Ascending aorta (tissue), 2 donors: ENCODE measurements at regions of chr1 and their contacts with region 1.

Region 1: GRCh38 chr1:160006312-160006940 is 25.4 kb downstream of the PIGM start:
- DNase-seq: peak; percentile 23 to 69
- H3K4me3 ChIP-seq: no peak overlapping the region
- H3K27ac ChIP-seq: no peak overlapping the region
- H3K4me1 ChIP-seq: no peaks in the 10 kb centered on the region
- H3K27me3 ChIP-seq: no peaks in the 10 kb centered on the region
- CTCF ChIP-seq: peak; percentile 49 to 74 (median 54)

Region 2: GRCh38 chr1:159798893-159799292 is 207.5 kb before region 1 on chr1:
- intact Hi-C with region 1: loop called (anchors 2 kb)
- DNase-seq: peak in 1 of 2 donors; percentile 75
- H3K4me3 ChIP-seq: no peak overlapping the region
- H3K27ac ChIP-seq: no peak overlapping the region
- H3K4me1 ChIP-seq: no peaks in the 10 kb centered on the region
- H3K27me3 ChIP-seq: no peaks in the 10 kb centered on the region
- CTCF ChIP-seq: peak; percentile 67 to 77 (median 69)

Region 3: GRCh38 chr1:159891275-159892157 is 114.9 kb before region 1 on chr1:
- intact Hi-C with region 1: loop called (anchors 5 kb)
- DNase-seq: peak; percentile 65 to 90
- H3K4me3 ChIP-seq: no peak overlapping the region
- H3K27ac ChIP-seq: peak overlapping the region in 1 of 2 donors; percentile 68
- H3K4me1 ChIP-seq: peaks cover 6 to 10% of the 10 kb centered on the region in 2 donors
- H3K27me3 ChIP-seq: no peaks in the 10 kb centered on the region
- CTCF ChIP-seq: peak; percentile 97 to 99 (median 97)

Region 4: DNA sequence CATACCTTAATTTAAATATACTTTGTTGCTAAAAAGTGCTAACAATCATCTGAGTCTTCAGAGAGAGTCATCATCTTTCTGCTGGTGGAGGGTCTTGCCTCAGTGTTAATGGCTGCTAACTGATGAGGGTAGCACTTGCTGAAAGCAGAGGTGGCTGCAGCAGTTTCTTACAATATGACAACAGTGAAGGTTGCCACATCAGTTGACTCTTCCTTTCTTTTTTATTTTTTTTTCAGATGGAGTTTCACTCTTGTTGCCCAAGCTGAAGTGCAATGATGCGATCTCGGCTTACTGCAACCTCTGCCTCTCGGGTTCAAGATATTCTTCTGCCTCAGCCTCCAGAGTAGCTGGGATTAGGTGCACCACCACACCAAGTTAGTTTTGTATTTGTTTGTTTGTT is 103.9 kb before region 1 on chr1:
- intact Hi-C with region 1: no loop called
- DNase-seq: no peak
- H3K4me3 ChIP-seq: no peak overlapping the region
- H3K27ac ChIP-seq: no peak overlapping the region
- H3K4me1 ChIP-seq: peaks cover 3 to 10% of the 10 kb centered on the region in 2 donors
- H3K27me3 ChIP-seq: no peaks in the 10 kb centered on the region
- CTCF ChIP-seq: no peak

Region 5: GRCh38 chr1:159936273-159936904 is 70.0 kb before region 1 on chr1:
- intact Hi-C with region 1: loop called (anchors 2 kb)
- DNase-seq: peak in 1 of 2 donors; percentile 77
- H3K4me3 ChIP-seq: no peak overlapping the region
- H3K27ac ChIP-seq: no peak overlapping the region
- H3K4me1 ChIP-seq: peaks cover 0 to 2% of the 10 kb centered on the region in 2 donors
- H3K27me3 ChIP-seq: no peaks in the 10 kb centered on the region
- CTCF ChIP-seq: peak; percentile 92 to 99 (median 98)

Region 6: DNA sequence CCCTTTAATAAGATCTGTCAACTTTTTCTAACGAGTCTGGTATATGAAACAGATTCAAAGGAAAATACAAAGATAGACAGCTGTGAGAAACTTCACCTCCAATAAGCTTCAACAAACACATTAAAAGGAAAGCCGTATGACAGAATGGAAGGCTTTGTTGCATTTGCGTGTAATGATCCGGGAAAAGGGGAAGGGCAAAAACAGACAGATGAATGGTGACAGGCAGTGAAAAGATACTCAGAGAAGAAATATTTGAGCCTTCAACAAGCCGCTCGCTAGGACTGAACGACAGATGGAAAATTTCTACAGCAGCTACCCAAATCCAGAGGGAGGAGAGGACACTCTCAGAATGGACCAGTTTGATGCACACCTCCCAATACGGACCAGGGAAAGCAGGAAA is 321.8 kb after region 1 on chr1:
- intact Hi-C with region 1: no loop called
- DNase-seq: no peak
- H3K4me3 ChIP-seq: no peak overlapping the region
- H3K27ac ChIP-seq: no peak overlapping the region
- H3K4me1 ChIP-seq: no peaks in the 10 kb centered on the region
- H3K27me3 ChIP-seq: no peaks in the 10 kb centered on the region
- CTCF ChIP-seq: no peak

Region 7: GRCh38 chr1:161887730-161888287 is 1881.4 kb after region 1 on chr1:
- intact Hi-C with region 1: no loop called
- DNase-seq: no peak
- H3K4me3 ChIP-seq: no peak overlapping the region
- H3K27ac ChIP-seq: no peak overlapping the region
- H3K4me1 ChIP-seq: peaks cover 0 to 4% of the 10 kb centered on the region in 2 donors
- H3K27me3 ChIP-seq: no peaks in the 10 kb centered on the region
- CTCF ChIP-seq: no peak